Activated CD8-positive, alpha-beta T cell treated with anti-CD3 and anti-CD28 coated beads for 36 hours (primary cell): ENCODE measurements at regions of chr16 and their contacts with region 1.

Region 1: GRCh38 chr16:20300312-20301097 is 26.8 kb downstream of the GP2 start:
- DNase-seq: peak; percentile 60
- ATAC-seq: no peak
- H3K4me3 Mint-ChIP-seq: no peak overlapping the region
- H3K27ac Mint-ChIP-seq: no peak overlapping the region
- H3K4me1 Mint-ChIP-seq: no peaks in the 10 kb centered on the region
- H3K27me3 Mint-ChIP-seq: peaks cover 3% of the 10 kb centered on the region
- CTCF ChIP-seq: peak; percentile 72

Region 2: DNA sequence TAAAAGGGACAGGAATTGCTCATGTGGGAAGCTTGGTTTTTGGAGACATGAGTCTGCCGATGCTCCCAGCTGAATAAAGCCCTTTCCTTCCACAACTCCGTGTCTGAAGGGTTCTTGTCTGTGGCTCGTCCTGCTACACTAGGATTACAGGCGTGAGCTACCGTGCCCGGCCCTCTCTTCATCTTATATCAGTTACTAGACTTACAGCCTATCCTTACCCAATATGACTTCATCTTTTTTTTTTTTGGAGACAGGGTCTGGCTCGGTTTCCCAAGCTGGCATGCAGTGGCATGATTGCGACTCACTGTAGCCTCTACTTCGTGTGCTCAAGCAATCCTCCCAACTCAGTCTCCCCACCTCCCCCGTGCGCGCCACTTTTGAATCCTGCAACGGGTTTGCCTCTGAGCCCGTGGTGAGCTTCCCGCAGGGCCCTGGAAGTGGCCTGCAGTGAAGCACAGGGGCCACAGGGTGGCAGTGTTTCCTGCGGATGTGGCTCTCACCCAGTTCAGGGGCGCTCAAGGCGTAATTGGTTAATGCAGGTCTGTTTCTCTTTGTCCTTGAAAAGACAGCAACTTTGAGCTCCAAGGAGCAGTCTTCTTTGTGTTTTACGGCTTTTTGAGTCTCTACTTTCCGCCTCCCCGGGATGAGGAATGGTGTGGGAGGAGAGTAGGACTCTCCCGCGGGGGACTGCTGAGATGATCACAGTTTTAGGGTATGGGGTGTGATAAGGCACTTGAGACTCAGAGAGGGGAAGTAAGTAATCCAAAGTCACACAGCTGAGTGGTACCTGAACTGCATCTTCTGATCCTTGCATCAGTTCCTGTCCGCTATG is 393.1 kb before region 1 on chr16:
- CTCF ChIA-PET with region 1: interaction called, 74 read pairs
- POLR2A ChIA-PET with region 1: no interaction called
- intact Hi-C with region 1: loop called (anchors 5 kb)
- DNase-seq: peak; percentile 79
- ATAC-seq: peak; percentile 100
- H3K4me3 Mint-ChIP-seq: peak overlapping the region; percentile 46
- H3K27ac Mint-ChIP-seq: no peak overlapping the region
- H3K4me1 Mint-ChIP-seq: peaks cover 11% of the 10 kb centered on the region
- H3K27me3 Mint-ChIP-seq: peaks cover 15% of the 10 kb centered on the region
- CTCF ChIP-seq: peak; percentile 97

Region 3: DNA sequence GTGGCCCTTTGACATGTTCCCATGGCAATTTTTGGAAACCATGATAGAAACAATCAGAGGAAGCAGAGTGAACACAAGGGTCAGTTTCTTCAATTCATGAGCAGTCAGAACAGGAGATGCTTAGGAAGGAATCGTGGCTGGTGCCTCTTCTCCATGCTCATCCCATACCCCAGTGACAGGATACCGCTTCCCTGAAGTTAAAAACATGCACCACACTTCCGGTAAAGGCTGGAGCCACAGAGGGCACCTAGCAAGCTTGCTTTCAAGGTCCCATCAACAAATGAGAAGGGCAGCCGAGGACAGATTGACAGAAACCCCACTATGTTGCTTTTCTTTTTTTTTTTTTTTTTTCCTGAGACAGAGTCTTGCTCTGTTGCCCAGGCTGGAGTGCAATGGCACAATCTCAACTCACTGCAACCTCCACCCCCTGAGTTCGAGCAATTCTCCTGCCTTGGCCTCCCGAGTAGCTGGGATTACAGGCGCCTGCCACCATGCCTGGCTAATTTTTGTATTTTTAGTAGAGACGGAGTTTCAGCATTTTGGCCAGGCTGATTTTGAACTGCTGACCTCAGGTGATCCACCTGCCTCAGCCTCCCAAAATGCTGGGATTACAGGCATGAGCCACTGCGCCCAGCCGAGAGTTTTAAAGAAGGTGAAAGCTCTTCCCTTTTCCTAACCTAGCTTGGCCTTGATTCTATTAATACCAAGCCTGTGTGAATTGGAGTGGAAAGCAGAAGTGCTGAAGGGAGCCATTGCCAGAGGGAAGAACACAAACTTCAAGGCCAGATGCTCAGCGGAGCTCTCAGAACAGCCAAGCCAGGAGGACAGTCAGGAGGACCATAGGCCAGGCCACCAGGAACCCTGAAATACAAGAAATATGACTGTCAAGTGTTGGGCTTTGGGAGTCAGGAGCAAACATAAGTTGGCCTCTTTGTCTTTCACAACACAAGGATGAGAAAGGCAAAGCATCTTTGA is 10.2 kb after region 1 on chr16:
- CTCF ChIA-PET with region 1: interaction called, 11 read pairs
- POLR2A ChIA-PET with region 1: no interaction called
- intact Hi-C with region 1: no loop called
- DNase-seq: no peak
- ATAC-seq: no peak
- H3K4me3 Mint-ChIP-seq: no peak overlapping the region
- H3K27ac Mint-ChIP-seq: no peak overlapping the region
- H3K4me1 Mint-ChIP-seq: no peaks in the 10 kb centered on the region
- H3K27me3 Mint-ChIP-seq: no peaks in the 10 kb centered on the region
- CTCF ChIP-seq: no peak

Region 4: DNA sequence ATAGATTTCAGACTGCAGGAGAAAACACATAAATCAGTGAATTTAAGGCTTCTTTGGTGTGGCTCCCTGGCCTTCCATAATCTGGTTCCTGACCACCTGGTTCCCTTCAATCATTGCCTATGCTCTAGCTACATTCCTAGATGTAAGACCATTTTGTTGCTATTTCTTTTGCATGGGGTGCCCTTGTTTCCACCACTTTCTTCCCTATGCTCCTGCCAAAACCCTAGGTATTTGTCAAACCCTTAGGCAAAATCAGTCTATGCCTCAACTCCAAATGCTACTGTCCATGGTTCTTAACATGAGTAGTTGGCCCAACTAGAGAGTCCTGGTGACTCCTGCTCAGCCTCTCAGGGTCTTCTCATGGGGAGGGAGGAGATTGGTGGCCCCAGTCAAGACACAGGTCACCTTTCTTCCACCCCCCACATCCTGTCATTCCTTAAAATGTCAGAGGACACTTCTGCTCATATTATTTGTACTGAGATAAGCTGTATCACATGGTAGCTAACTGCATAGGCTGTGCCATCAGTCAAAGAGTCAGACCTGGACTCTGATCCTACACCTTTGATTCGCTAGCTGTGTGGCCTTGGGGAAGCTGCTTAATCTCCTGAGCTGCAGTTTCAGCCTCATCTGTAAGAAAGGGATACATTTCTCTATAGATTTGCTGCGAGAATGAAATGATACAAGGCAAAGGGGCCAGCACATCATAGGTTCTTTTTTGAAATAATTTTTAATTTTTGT is 123.8 kb after region 1 on chr16:
- CTCF ChIA-PET with region 1: no interaction called
- POLR2A ChIA-PET with region 1: no interaction called
- intact Hi-C with region 1: no loop called
- DNase-seq: no peak
- ATAC-seq: no peak
- H3K4me3 Mint-ChIP-seq: no peak overlapping the region
- H3K27ac Mint-ChIP-seq: no peak overlapping the region
- H3K4me1 Mint-ChIP-seq: no peaks in the 10 kb centered on the region
- H3K27me3 Mint-ChIP-seq: peaks cover 3% of the 10 kb centered on the region
- CTCF ChIP-seq: no peak